Activated T-helper 1 cell treated with anti-CD3 and anti-CD28 coated beads, Interleukin-12 subunit alpha, Interleukin-12 subunit beta, Interleukin-2, Interleukin-4 antibody, amounts not matched to agents 30 ng/mL and 10 ng/mL and 1 ng/mL, durations not matched to agents 14 hours and 24 hours and 36 hours (primary cell): ENCODE measurements at regions of chr17 and their contacts with region 1.

Region 1: DNA sequence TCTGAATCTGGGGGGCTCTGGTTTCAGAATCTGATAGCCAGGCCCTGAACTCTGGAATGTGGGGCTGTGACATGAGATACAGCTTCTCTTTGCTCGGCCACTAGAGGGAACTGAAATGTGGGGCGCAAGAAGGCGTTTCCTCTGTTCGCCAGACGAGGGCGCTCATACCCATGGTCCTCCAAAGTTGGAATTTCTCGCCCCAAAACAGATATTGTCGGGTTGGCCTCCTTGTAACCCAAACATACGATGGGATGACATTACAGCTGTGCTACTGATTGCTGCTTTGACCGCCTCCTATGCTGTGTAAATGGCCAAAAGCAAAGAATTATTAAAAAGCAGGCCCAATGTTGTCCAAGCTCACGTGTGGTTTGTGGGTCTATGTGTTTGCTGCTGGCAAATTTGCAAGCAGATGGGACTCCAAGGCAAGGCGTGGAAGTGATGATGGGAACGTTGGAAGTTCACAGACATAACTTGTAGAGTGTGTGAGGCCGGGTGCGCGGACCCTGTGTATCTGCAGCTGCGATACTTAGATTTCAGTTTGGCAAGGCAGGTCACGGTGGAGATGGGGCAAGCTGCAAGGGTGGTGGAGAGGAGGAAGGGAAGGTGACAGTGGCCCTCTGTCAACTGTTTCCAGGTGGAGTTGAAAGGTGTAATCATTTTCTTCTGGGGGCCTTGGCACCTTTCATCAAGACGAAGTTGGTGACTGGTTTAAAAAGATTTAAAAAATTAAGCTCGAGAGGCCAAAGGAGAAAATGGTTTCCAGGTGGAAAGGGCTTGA is 13.0 kb upstream of the MSI2 start:
- DNase-seq: peak; percentile 66
- H3K4me3 Mint-ChIP-seq: no peak overlapping the region
- H3K27ac Mint-ChIP-seq: peak overlapping the region; percentile 30
- H3K4me1 Mint-ChIP-seq: peaks cover 12% of the 10 kb centered on the region
- H3K27me3 Mint-ChIP-seq: peaks cover 23% of the 10 kb centered on the region

Region 2: DNA sequence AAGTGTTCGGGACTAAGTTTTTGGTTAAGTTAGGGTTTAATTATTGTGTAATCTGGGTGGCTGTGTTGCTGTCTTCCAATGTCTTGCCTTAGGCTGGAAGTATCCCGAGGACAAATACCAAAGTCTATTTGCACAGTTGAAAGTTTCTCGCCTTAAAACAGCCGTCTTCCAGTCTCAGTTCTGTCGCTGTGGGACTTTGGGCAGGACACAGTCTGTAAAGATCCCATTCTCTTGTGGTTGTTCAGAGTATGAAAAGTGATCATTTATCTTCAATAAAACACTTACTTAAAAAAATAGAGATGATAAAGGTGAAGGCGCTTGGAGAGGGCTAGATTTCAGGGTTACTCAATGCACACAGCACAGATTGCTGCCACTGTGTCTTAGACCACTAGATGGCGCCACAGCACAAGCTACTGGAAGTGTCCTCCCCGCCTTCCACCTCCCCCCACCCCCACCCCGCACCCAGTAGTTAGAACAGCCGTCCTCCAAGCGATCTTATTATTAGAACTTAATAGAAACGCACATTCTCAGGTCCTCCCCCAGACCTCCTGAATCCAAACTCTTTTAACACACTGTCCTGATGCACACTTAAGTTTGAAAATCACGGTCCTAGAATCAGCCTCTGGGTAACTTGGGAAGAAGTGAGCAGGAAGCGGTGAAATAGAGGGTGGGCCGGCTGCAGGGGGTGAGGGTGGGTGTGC is 112.4 kb before region 1 on chr17:
- intact Hi-C with region 1: loop called (anchors 2 kb)
- DNase-seq: peak; percentile 61
- H3K4me3 Mint-ChIP-seq: no peak overlapping the region
- H3K27ac Mint-ChIP-seq: peak overlapping the region; percentile 52
- H3K4me1 Mint-ChIP-seq: peaks cover 11% of the 10 kb centered on the region
- H3K27me3 Mint-ChIP-seq: no peaks in the 10 kb centered on the region

Region 3: GRCh38 chr17:57271821-57272220 is 28.5 kb after region 1 on chr17:
- intact Hi-C with region 1: no loop called
- DNase-seq: no peak
- H3K4me3 Mint-ChIP-seq: no peak overlapping the region
- H3K27ac Mint-ChIP-seq: no peak overlapping the region
- H3K4me1 Mint-ChIP-seq: peaks cover 73% of the 10 kb centered on the region
- H3K27me3 Mint-ChIP-seq: no peaks in the 10 kb centered on the region

Region 4: DNA sequence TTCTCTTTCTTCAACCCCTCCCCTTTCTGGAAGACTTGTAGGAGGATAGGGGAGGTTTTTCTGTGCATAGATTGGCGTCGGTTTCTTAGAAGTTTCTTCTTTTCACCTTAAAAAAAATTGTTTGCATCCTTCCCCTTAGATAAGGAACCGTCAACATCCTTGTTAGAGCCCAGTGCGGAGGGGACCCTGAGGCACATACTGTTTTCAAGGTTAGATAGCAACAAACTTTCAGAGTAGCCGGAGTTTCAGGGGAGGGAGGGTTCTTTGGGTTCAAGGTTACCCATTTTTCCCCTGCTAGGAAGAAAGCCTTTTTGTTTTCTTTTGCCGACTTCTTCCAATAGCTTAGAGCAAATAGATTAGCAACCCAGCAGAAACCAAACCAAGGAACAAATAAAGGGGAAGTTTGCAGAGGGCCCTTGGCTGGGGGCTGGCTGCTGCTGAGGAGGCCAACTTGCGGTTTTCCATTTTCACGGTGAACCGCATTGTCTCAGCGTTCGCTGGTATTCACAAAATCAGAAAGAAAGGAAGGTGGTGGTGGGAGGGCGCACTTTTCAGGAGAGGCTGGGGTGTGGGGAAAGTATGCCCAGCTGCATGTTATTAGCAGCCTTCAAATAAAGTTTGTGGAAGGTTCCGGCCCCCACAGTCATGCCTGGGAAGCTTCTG is 41.8 kb after region 1 on chr17:
- intact Hi-C with region 1: loop called (anchors 1 kb)
- DNase-seq: peak; percentile 64
- H3K4me3 Mint-ChIP-seq: peak overlapping the region; percentile 59
- H3K27ac Mint-ChIP-seq: peak overlapping the region; percentile 94
- H3K4me1 Mint-ChIP-seq: peaks cover 94% of the 10 kb centered on the region
- H3K27me3 Mint-ChIP-seq: no peaks in the 10 kb centered on the region

Region 5: GRCh38 chr17:57515656-57516211 is 272.4 kb after region 1 on chr17:
- intact Hi-C with region 1: loop called (anchors 2 kb)
- DNase-seq: no peak
- H3K4me3 Mint-ChIP-seq: no peak overlapping the region
- H3K27ac Mint-ChIP-seq: peak overlapping the region; percentile 5
- H3K4me1 Mint-ChIP-seq: peaks cover 20% of the 10 kb centered on the region
- H3K27me3 Mint-ChIP-seq: peaks cover 2% of the 10 kb centered on the region

Region 6: GRCh38 chr17:57747221-57748017 is 504.1 kb after region 1 on chr17:
- intact Hi-C with region 1: loop called (anchors 1 kb)
- DNase-seq: peak; percentile 10
- H3K4me3 Mint-ChIP-seq: no peak overlapping the region
- H3K27ac Mint-ChIP-seq: no peak overlapping the region
- H3K4me1 Mint-ChIP-seq: peaks cover 4% of the 10 kb centered on the region
- H3K27me3 Mint-ChIP-seq: peaks cover 24% of the 10 kb centered on the region